ENCODE measurements at regions of chr12 and their contacts with region 1.

Region 1: GRCh38 chr12:47032644-47033043 is 46.8 kb upstream of the PCED1B start:
- H3K4me3 ChIP-seq: no peak overlapping the region
- H3K27ac ChIP-seq: no peak overlapping the region
- H3K4me1 ChIP-seq: no peaks in the 10 kb centered on the region
- CTCF ChIP-seq: peak; percentile 32; the same call in 1 of the 2 replicates

Region 2: DNA sequence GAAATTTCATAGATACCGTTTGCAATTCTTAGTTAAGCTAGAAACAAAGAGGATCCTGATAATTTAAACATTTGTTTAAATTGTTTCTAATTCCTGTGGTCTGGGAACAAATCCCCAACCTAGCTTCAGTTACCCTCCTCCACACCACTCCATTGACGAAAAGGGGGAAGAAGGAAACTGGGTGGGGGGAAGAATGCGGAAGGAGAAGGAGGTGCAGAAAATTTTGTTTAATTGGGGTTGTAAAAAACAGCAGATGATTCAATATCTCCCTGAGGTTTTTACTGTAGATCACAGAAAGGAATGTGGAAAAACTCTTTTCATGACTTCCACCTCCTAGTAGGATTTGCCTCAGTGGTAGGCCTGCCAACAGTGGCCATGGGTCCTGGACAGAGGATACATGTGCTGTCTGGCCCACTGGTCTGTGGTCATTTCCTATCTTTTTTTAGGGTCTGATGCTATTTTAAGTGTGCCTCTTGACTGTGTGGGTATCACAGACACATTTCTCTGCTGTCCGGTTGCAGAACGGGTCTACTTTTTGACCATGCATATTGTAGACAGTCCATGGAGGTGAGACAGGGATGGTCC is 76.1 kb before region 1 on chr12:
- CTCF ChIA-PET with region 1: no interaction called
- POLR2A ChIA-PET with region 1: no interaction called
- H3K4me3 ChIP-seq: no peak overlapping the region
- H3K27ac ChIP-seq: no peak overlapping the region
- H3K4me1 ChIP-seq: no peaks in the 10 kb centered on the region
- CTCF ChIP-seq: no peak

Region 3: DNA sequence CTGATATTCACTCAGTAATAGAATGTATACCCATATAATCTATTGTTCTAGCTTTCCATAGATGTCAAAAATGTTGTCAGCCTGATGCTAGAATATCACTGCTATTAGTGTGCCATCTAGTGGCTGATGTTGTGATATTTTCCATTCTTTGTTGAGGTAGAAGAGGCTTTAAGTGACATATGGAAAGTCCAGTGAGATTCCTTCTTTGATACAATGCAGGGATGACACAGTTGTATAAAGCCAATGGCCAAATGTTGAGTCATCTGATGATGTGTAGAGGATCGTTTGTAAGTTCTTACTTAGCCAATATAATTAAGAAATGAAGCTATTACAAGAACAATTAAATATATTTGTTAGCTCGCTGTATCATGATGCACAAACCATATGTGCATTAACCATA is 11.3 kb before region 1 on chr12:
- CTCF ChIA-PET with region 1: interaction called, 14 read pairs
- POLR2A ChIA-PET with region 1: no interaction called
- H3K4me3 ChIP-seq: no peak overlapping the region
- H3K27ac ChIP-seq: no peak overlapping the region
- H3K4me1 ChIP-seq: no peaks in the 10 kb centered on the region
- CTCF ChIP-seq: no peak

Region 4: GRCh38 chr12:47071241-47071852 is 38.7 kb after region 1 on chr12:
- CTCF ChIA-PET with region 1: interaction called, 27 read pairs
- POLR2A ChIA-PET with region 1: no interaction called
- H3K4me3 ChIP-seq: no peak overlapping the region
- H3K27ac ChIP-seq: no peak overlapping the region
- H3K4me1 ChIP-seq: no peaks in the 10 kb centered on the region
- CTCF ChIP-seq: 0 out of 2 replicates have a peak, but pooled peaks have one; percentile 5

Region 5: DNA sequence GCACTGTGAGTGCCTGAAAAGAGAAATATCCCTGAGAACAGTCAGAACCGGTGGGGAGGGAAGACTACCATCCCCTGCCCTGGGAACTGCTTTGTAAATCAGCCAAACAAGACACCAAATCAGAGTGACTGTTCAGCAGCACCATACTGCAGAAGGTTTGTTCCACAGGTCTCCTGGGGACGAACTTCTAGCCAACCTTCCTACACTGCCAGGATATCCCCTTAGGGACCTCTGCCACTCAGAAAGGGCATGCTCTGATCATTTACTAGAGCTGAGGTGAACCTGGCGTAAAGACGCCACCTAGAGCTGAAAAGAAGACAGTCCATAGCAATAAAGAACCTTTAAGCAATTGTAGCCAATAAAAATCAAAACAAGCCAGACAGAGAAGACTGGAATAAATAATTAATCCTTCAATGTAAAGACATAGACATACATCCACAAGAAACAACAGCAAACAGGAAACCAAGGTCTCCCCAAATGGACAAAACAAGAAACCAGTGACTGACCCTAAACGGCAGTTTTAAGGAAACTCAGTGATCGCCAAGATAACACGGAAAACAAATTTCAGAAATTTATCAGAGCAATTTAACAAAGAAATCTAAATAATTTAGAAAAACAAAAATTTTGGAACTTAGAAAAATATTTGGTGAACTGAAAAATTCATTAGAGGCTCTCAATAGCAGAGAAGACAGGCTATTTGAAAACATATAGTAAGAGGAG is 275.2 kb after region 1 on chr12:
- CTCF ChIA-PET with region 1: interaction called, 26 read pairs
- POLR2A ChIA-PET with region 1: no interaction called
- H3K4me3 ChIP-seq: no peak overlapping the region
- H3K27ac ChIP-seq: no peak overlapping the region
- H3K4me1 ChIP-seq: no peaks in the 10 kb centered on the region
- CTCF ChIP-seq: peak; percentile 57

Region 6: GRCh38 chr12:47397664-47398281 is 365.1 kb after region 1 on chr12:
- CTCF ChIA-PET with region 1: interaction called, 28 read pairs
- POLR2A ChIA-PET with region 1: interaction called, 3 read pairs
- H3K4me3 ChIP-seq: no peak overlapping the region
- H3K27ac ChIP-seq: no peak overlapping the region
- H3K4me1 ChIP-seq: 0 out of 2 replicates have a peak, but pooled peaks cover 3% of the 10 kb centered on the region
- CTCF ChIP-seq: no peak; the same call in none of the 2 replicates

Region 7: DNA sequence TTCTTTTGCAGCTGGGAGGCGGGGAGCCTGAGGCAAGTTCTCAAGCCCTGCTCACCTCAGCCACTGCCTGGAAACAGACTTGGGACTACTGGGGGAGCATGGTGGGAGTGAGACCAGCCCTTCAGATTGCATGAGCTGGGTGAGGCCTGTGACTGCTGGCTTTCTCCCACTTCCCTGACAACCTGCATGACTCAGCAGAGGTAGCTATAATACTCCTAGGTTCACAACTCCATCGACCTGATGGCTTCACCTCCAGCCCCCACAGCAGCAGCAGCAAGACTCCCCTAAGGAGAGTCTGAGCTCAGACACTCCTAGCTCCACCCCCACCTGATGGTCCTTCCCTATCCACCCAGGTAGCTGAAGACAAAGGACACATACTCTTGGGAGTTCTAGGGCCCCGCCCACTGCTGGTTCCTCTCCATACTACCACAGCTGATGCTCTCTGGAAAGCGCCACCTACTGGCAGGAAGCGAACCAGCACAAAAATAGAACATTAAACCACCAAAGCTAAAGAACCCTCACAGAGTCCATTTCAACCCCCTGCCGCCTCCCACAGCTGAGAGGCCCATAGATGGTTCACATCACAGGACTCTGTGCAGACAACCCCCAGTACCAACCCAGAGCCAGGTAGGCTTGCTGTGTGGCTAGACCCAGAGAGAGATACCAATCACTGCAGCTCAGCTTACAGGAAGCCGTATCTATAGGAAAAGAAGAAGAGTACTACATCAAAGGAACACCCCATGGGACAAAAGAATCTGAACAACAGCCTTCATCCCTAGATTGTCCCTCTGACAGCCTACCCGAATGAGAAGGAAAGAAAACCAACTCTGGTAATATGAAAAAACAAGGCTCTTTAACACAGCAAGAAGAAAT is 604.5 kb after region 1 on chr12:
- CTCF ChIA-PET with region 1: interaction called, 11 read pairs
- POLR2A ChIA-PET with region 1: no interaction called
- H3K4me3 ChIP-seq: no peak overlapping the region
- H3K27ac ChIP-seq: no peak overlapping the region
- H3K4me1 ChIP-seq: no peaks in the 10 kb centered on the region
- CTCF ChIP-seq: no peak

Measured in HEK293 (cell line).